ENCODE measurements at regions of chr1 and their contacts with region 1.

Region 1: DNA sequence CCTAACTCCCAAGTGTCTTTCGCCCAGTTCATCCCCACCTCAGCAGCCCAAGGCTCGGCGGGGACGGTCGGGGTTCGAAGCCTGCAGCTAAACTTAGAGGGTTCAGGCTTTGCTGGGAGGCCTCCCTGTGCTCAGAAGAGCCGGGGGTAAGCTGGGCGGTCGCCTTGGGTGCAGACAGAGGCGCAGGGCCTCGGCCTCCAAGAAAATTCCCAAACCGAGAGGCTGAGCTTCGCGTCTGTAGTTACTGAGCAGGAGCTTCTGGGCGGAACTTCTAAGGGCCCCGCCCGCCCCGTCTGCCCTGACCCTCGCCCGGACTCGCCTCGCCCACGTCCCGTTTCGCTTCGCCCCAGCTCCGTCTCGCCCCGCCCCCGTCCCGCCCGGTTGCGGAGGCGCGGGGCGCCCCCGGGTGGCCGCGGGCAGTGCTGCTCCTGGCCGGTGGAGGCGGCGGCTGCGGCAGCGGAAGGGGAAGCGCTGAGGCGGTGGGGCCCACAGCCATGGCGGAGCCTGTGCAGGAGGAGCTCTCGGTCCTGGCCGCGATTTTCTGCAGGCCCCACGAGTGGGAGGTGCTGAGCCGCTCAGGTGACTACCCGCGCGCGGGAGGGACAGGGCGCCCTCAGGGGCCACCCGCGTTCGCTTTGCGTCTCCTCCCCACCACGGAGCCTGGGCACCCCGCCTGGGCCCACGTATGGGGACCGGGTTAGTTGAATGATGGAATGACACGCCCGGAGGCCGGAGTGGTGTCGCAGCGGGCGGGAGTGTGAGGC is at the start of gene RWDD3:
- DNase-seq: peak; percentile 64
- ATAC-seq: peak; percentile 92
- H3K4me3 ChIP-seq: peak within 1 kb of the TSS; percentile 82 to 98 (median 98)
- H3K27ac ChIP-seq: peak within 1 kb of the TSS; percentile 95
- H3K4me1 ChIP-seq: peaks cover 53% of the 10 kb centered on the region
- H3K27me3 ChIP-seq: no peaks in the 10 kb centered on the region; a peak in 1 of 5 replicates
- CTCF ChIP-seq: peak; percentile 86
- EP300 ChIP-seq: peak in 1 of 2 experiments; percentile 18; a peak in 1 of 4 replicates
- POLR2A ChIP-seq: peak; percentile 83 to 91
- RAD21 ChIP-seq: peak; percentile 96
- total RNA-seq, gene RWDD3: 21.2 and 22.7 TPM in 2 replicates

Region 2: DNA sequence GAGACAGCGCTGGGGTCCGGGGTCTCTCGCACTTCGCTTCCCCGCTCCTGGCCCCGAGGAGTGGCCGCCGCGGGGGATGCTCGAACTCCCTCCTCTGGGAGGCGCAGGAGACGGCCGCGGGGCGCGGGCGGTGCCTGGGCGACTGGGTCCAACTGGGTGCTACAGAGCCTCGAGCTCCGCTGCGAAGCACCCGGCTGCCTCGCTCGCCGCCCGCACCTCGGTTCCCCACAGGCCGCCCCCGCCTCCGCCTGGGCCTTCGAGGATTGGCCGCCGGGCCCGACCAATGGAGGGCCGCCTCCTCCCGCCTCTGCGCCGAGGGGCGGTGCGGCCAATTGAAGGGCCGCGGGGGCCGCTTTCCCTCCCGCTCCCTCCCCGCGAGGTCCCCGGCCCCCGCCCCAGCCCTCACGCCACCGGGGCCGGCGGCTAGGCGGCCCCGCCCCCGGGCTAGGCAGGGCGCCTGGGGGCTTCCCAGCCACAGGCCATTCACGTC is 307.0 kb before region 1 on chr1 and contains the start of gene CNN3:
- CTCF ChIA-PET with region 1: no interaction called
- POLR2A ChIA-PET with region 1: no interaction called
- in situ Hi-C with region 1: no loop called
- intact Hi-C with region 1: loop called (anchors 5 kb)
- DNase-seq: peak; percentile 82
- ATAC-seq: peak; percentile 92
- H3K4me3 ChIP-seq: peak within 1 kb of the TSS; percentile 79 to 81 (median 81)
- H3K27ac ChIP-seq: peak within 1 kb of the TSS; percentile 95
- H3K4me1 ChIP-seq: peaks cover 64% of the 10 kb centered on the region
- H3K27me3 ChIP-seq: no peaks in the 10 kb centered on the region; a peak in 1 of 5 replicates
- CTCF ChIP-seq: peak; percentile 39
- EP300 ChIP-seq: no peak; a peak in 1 of 4 replicates
- POLR2A ChIP-seq: peak; percentile 92 to 97
- RAD21 ChIP-seq: peak; percentile 40
- total RNA-seq, gene CNN3: 223 and 290 TPM in 2 replicates

Region 3: DNA sequence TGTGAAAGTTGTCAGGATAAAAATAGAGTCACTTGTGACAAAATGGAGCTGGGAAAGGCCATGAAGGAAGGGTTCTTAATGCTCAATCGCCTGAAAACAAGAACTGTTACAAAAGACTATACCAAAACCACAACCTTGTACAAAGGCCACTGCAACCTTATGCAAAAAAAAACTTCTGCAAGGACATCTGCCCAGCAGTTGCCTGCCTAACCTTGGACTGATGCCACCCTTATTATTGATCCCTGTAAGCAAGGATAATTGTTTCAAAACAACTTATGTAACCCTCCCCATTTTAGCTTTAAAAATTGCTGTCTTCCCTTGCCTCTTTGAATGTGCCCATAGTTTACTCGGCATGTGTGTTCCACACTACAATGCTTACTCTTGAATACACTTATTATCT is 166.9 kb before region 1 on chr1:
- CTCF ChIA-PET with region 1: no interaction called
- POLR2A ChIA-PET with region 1: interaction called, 36 read pairs
- in situ Hi-C with region 1: no loop called
- intact Hi-C with region 1: loop called (anchors 1 kb)
- DNase-seq: peak; percentile 71
- ATAC-seq: peak; percentile 57
- H3K4me3 ChIP-seq: peak overlapping the region in 1 of 3 experiments; percentile 13; a peak in 1 of 6 replicates
- H3K27ac ChIP-seq: peak overlapping the region; percentile 86
- H3K4me1 ChIP-seq: peaks cover 64% of the 10 kb centered on the region
- H3K27me3 ChIP-seq: no peaks in the 10 kb centered on the region
- CTCF ChIP-seq: no peak
- EP300 ChIP-seq: peak in 1 of 2 experiments; percentile 93; a peak in 2 of 4 replicates
- POLR2A ChIP-seq: no peak
- RAD21 ChIP-seq: no peak

Region 4: DNA sequence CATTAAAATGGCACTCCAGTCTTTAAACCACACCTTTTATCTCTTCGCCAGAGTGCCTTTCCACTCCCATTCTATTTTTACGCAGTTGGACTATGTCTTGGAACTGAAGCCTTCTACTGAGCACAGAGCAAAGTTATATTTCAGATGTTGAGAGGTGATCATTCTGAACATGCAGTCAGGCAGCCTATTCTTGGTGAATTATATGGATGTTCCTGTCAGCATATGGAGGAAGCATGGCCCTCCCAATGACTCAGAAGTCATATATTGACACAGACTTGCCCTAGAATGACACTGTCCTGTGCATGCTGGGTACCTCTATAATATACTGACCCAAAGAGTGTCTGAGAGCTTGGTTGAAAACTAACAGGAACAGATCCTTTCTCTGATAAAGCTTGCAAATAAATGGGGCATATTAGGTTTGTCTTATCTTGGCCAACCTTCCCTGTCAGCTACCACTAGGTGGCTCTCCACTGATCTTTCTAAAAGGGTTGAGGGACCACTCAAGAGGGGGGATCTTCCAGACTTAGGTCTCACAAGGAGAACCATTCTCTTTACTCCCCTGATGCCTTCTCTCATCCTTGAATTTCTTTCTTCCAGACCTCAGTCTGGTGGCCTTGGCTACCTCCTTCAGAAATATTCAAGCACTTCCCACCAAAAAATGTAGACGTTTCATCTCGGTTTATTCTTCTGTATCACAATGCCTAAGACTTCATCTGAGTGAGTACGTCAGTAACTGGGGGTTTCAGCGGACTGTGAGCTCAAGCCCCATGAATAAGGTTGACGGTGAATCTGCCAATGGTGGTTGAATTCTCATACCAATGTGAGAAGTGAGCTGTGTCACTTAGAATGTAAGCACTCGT is 149.4 kb before region 1 on chr1:
- CTCF ChIA-PET with region 1: interaction called, 3 read pairs
- POLR2A ChIA-PET with region 1: interaction called, 7 read pairs
- in situ Hi-C with region 1: loop called (anchors 10 kb)
- intact Hi-C with region 1: loop called (anchors 1 kb)
- DNase-seq: peak; percentile 80
- ATAC-seq: peak; percentile 90
- H3K4me3 ChIP-seq: no peak overlapping the region
- H3K27ac ChIP-seq: no peak overlapping the region
- H3K4me1 ChIP-seq: peaks cover 48% of the 10 kb centered on the region
- H3K27me3 ChIP-seq: no peaks in the 10 kb centered on the region; a peak in 1 of 5 replicates
- CTCF ChIP-seq: peak; percentile 75
- EP300 ChIP-seq: peak in 1 of 2 experiments; percentile 34; a peak in 1 of 4 replicates
- POLR2A ChIP-seq: no peak
- RAD21 ChIP-seq: peak; percentile 37; the same call in 1 of the 2 replicates

Region 5: GRCh38 chr1:95122151-95122697 is 111.7 kb before region 1 on chr1:
- CTCF ChIA-PET with region 1: interaction called, 6 read pairs
- POLR2A ChIA-PET with region 1: interaction called, 26 read pairs
- in situ Hi-C with region 1: no loop called
- intact Hi-C with region 1: loop called (anchors 1 kb)
- DNase-seq: peak; percentile 99
- ATAC-seq: peak; percentile 91
- H3K4me3 ChIP-seq: no peak overlapping the region
- H3K27ac ChIP-seq: peak overlapping the region; percentile 96
- H3K4me1 ChIP-seq: peaks cover 72% of the 10 kb centered on the region
- H3K27me3 ChIP-seq: no peaks in the 10 kb centered on the region
- CTCF ChIP-seq: peak; percentile 20; the same call in 1 of the 2 replicates
- EP300 ChIP-seq: peak; percentile 84 to 95; a peak in 3 of 4 replicates
- POLR2A ChIP-seq: peak in 1 of 2 experiments; percentile 36; a peak in 1 of 4 replicates
- RAD21 ChIP-seq: 0 out of 2 replicates have a peak, but pooled peaks have one; percentile 31

Region 6: DNA sequence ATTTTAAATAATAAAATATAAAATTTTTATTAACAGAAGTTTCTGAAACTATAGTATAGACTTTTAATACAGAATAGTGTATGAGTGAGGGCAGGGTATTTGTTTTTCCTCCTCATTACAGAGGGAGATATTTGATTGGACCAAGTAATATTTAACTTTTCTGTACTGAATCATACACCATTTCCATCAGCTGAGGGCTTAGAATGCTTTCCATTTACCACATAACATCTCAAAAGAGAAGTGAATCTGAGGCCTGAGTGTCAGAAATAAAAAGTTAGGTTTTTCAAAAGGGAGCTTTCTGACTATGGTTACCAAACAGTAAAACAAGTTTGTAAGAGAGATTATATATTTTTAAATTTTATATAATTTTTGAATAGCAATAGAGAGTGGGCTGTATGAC is 87.3 kb before region 1 on chr1:
- CTCF ChIA-PET with region 1: no interaction called
- POLR2A ChIA-PET with region 1: no interaction called
- in situ Hi-C with region 1: no loop called
- intact Hi-C with region 1: no loop called
- DNase-seq: no peak
- ATAC-seq: no peak
- H3K4me3 ChIP-seq: no peak overlapping the region
- H3K27ac ChIP-seq: no peak overlapping the region
- H3K4me1 ChIP-seq: no peaks in the 10 kb centered on the region
- H3K27me3 ChIP-seq: no peaks in the 10 kb centered on the region
- CTCF ChIP-seq: no peak
- EP300 ChIP-seq: no peak
- POLR2A ChIP-seq: no peak
- RAD21 ChIP-seq: no peak

Region 7: DNA sequence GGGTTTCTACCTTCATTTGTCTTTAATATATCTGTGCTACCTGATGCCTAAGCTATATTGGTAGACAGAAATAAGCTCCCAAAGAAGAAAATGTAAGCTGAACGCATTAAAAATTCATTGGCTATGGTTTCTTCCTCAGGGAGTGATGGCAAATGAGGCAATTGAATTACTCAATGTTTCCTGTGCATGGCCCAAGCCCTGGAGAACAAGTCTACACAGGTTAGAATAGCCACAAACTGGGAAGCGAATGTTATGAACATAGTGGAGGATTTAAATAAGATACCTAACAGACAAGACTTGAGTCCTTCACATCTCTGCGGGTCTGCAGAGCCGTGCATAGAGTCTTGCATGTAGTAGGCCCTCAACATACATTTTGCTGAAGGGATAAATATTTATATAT is 350.4 kb after region 1 on chr1:
- CTCF ChIA-PET with region 1: no interaction called
- POLR2A ChIA-PET with region 1: no interaction called
- in situ Hi-C with region 1: no loop called
- intact Hi-C with region 1: no loop called
- DNase-seq: no peak
- ATAC-seq: no peak
- H3K4me3 ChIP-seq: no peak overlapping the region
- H3K27ac ChIP-seq: no peak overlapping the region
- H3K4me1 ChIP-seq: no peaks in the 10 kb centered on the region
- H3K27me3 ChIP-seq: no peaks in the 10 kb centered on the region
- CTCF ChIP-seq: no peak
- EP300 ChIP-seq: no peak
- POLR2A ChIP-seq: no peak
- RAD21 ChIP-seq: no peak